Adrenal gland (tissue), 19 donors: ENCODE measurements at regions of chr3 and their contacts with region 1.

Region 1: DNA sequence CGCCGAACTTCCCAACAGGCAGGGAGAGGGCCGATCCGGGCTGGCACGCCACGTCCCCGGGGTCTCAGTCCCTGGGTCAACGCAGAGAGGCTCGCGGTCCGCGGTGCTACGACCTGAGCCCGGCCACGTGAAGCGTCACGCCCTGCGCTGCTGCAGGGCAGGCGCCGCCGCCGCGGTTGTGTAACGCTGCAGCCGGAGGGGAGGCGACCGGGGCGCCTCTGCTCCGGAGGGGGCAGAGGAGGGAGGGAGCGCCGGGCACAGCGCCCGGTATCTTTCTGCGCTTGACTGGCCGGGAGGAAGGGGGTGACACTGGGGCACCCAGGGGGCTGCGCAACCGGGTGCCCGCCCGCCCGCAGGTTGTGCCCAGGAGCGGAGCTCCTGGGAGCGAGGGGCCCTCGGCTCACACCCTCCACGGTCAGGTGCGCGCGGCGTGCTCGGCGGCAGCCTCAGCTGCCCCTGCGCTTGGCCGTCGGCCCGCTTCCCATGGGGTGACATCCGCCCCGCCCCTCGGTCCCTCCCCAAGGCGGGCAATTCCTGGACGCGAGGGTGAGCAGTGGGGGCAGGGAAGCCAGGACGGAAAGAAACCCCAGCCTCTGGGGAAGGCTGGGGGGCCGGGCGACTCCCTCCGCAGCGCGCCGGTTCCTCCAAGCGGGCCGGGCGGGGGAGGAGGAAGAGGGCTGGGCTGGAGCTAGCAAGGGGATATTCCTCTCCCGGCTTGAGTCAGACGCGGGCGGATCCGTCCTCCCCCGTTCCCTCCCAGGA is 852 bp upstream of the BHLHE40 start:
- DNase-seq: peak; percentile 98 to 99 (median 99)
- H3K4me3 ChIP-seq: peak overlapping the region; percentile 5 to 87 (median 44)
- H3K27ac ChIP-seq: peak overlapping the region; percentile 98 to 100 (median 99)
- H3K4me1 ChIP-seq: peaks cover 28 to 29% of the 10 kb centered on the region in 2 donors
- H3K27me3 ChIP-seq: no peaks in the 10 kb centered on the region
- CTCF ChIP-seq: peak in 1 of 6 experiments; percentile 2
- POLR2A ChIP-seq: peak; percentile 67 to 84

Region 2: DNA sequence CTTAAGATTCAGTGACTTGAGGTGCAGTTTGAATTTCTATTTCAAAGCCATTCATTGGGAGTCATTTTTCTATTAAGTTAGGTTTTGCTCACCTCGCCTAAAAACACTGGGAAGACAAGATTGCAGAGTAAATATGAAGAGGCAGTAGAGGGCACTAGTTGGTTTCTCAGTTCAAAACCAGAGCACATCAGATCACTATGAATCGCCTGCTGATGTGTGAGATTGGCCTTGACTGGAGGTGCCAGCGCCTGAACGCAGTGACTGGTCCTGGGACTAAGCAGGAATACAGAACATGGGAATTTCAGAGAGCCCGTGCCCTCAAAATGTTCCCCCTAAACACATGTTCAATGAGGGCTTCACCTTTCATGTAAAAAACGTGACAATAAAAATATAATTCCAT is 256.3 kb before region 1 on chr3:
- intact Hi-C with region 1: loop called (anchors 5 kb)
- DNase-seq: peak; percentile 68 to 90 (median 85)
- H3K4me3 ChIP-seq: no peak overlapping the region
- H3K27ac ChIP-seq: peak overlapping the region; percentile 70 to 93 (median 78)
- H3K4me1 ChIP-seq: peaks cover 26 to 45% of the 10 kb centered on the region in 2 donors
- H3K27me3 ChIP-seq: no peaks in the 10 kb centered on the region
- CTCF ChIP-seq: peak; percentile 20 to 71 (median 58)
- POLR2A ChIP-seq: peak in 1 of 2 donors; percentile 36

Region 3: GRCh38 chr3:4906107-4906621 is 72.2 kb before region 1 on chr3:
- intact Hi-C with region 1: loop called (anchors 5 to 10 kb)
- DNase-seq: no peak
- H3K4me3 ChIP-seq: no peak overlapping the region
- H3K27ac ChIP-seq: no peak overlapping the region
- H3K4me1 ChIP-seq: peaks cover 0 to 32% of the 10 kb centered on the region in 2 donors
- H3K27me3 ChIP-seq: no peaks in the 10 kb centered on the region
- CTCF ChIP-seq: no peak
- POLR2A ChIP-seq: no peak

Region 4: GRCh38 chr3:5026331-5027218 is 48.2 kb after region 1 on chr3:
- intact Hi-C with region 1: loop called in 1 of 2 experiments (anchors 5 kb)
- DNase-seq: peak; percentile 90 to 96 (median 94)
- H3K4me3 ChIP-seq: peak overlapping the region in 2 of 4 donors; percentile 51 to 63
- H3K27ac ChIP-seq: peak overlapping the region in 4 of 5 donors; percentile 77 to 92 (median 86)
- H3K4me1 ChIP-seq: peaks cover 6 to 7% of the 10 kb centered on the region in 2 donors
- H3K27me3 ChIP-seq: no peaks in the 10 kb centered on the region
- CTCF ChIP-seq: peak; percentile 58 to 92 (median 86)
- POLR2A ChIP-seq: peak; percentile 4 to 48

Region 5: DNA sequence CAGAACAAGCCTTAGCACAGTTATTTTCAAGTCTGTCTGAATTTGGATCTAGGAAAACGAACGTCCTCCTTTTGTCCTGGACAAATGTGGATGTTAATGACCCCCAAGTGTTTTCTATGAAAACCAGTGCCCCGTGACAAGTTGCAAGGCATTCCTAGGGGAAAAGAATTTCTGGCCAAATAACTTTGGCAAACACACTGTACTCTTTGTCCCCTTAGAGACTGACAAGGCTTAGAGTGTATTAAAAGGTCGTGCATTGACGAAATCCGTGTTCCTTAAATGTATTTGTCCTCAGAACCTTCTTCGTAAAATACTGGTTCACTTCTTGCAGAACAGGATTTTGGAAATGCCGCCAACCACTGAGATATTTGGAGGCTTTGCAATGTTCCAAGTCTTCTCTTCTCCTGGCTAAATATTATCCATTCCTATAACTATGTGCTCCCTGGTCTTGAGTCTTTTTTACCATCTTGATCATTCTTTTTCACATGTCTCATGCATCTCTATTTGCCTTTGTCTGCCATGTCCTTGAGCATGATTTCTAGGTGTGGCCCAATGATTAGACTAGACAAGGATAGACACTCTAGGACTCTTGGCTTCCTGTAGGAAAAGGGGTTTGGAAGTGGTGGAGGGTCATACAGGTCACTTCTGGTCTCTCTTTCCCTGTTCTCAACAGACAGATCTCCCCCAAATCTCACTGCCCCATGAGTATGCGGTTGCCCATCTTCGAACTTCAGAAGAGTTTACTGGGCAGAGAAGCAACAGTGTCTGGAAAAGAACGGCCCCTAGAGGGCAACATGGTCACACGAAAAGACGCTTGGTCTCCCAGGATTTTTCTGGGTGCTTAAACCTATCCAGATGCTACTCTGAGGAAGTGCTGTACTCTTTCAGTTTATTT is 326.7 kb after region 1 on chr3:
- intact Hi-C with region 1: no loop called
- DNase-seq: peak; percentile 22 to 73 (median 30)
- H3K4me3 ChIP-seq: no peak overlapping the region
- H3K27ac ChIP-seq: no peak overlapping the region
- H3K4me1 ChIP-seq: no peaks in the 10 kb centered on the region
- H3K27me3 ChIP-seq: peaks cover 5% of the 10 kb centered on the region
- CTCF ChIP-seq: peak; percentile 38 to 66 (median 54)
- POLR2A ChIP-seq: no peak